Vagina (tissue), 2 donors: ENCODE measurements at regions of chr3 and their contacts with region 1.

Region 1: GRCh38 chr3:52809662-52810377 is 15.2 kb downstream of the ITIH3 start:
- DNase-seq: no peak
- H3K4me3 ChIP-seq: no peak overlapping the region
- H3K27ac ChIP-seq: no peak overlapping the region
- H3K4me1 ChIP-seq: no peaks in the 10 kb centered on the region
- H3K27me3 ChIP-seq: no peaks in the 10 kb centered on the region
- CTCF ChIP-seq: no peak
- POLR2A ChIP-seq: no peak

Region 2: DNA sequence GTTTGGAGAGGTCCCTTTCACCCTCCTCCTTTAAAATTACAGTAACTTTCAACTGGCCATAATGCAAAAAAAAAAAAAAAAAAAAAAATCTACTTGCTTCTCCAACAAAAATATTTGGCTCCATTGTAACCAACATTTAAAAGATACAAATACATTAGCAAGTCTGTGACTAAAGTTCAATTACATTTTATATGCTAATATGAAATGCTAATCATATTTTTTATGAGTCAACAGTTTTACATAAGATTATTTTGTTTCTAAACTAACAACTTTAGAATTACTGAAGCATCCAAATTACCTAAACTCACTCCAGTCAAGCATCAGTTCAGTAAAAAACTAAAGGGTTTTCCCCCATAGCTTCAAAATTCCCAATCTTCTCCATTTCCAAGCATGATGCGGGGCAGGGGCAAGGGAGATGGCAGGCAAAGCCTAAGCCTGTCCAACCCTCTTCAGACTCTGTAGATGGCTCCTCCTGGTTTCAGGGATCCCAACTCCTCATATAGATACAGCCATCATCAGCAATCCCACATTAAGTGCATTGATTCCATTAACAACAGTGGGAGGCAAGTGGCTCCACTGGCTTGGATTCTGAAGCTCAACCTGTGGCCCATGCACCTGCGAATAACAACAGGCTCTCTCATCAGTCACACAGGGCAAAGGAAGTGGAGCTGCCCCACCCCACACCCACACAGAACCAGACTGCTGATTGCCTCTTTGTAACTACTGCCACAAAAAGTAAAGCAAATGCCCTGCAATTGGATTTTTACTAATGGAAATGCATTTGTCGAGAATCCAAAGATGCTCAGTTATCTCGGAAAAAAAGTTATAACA is 221.0 kb after region 1 on chr3:
- intact Hi-C with region 1: no loop called
- DNase-seq: no peak
- H3K4me3 ChIP-seq: no peak overlapping the region
- H3K27ac ChIP-seq: no peak overlapping the region
- H3K4me1 ChIP-seq: no peaks in the 10 kb centered on the region
- H3K27me3 ChIP-seq: no peaks in the 10 kb centered on the region
- CTCF ChIP-seq: no peak
- POLR2A ChIP-seq: no peak

Region 3: DNA sequence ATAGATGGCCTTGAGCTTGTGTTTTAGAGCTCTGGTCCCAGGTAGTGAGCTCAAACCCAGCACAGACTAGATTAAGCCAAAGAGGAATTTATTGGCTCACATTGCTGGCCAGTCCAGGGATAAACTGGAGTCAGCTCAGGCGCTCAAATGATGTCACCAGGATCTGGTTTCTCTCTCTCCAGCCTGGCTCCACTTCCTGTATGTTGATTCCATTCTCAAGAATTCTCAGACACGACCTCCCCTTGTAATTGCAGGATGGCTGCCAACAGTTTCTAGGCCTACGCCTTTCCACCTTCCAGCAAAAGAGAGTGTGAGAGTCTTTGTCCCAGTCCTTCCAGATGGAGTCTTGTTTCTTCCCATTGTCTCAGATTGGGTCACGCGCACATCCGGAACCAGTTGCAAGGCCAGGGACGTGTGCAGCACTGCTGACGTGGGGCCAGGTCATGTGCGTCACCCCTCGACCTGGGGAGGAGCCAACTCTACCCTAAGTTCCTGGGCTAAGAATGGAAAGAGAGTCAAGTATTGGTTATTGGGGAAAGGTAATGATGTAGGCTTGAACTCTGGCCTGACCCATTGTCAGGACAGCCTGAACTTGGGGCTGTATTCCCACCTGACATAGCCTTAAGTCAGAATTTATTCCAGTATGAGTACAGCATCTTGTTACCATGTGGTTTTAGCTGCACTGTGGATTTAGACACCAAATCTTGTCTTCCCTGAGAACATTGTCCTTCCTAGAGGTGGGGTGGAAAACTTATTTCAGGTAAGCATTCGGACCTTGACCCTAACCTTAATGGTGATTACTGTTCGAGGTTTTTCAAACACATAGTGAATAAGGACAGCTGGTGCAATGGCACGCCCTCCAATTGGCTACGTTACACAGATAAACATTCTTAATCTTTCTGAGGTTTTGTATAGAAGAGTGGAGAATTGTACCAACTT is 716.2 kb after region 1 on chr3:
- intact Hi-C with region 1: loop called (anchors 5 kb)
- DNase-seq: no peak
- H3K4me3 ChIP-seq: no peak overlapping the region
- H3K27ac ChIP-seq: no peak overlapping the region
- H3K4me1 ChIP-seq: no peaks in the 10 kb centered on the region
- H3K27me3 ChIP-seq: no peaks in the 10 kb centered on the region
- CTCF ChIP-seq: no peak
- POLR2A ChIP-seq: no peak